ENCODE measurements at regions of chr11 and their contacts with region 1.

Region 1: DNA sequence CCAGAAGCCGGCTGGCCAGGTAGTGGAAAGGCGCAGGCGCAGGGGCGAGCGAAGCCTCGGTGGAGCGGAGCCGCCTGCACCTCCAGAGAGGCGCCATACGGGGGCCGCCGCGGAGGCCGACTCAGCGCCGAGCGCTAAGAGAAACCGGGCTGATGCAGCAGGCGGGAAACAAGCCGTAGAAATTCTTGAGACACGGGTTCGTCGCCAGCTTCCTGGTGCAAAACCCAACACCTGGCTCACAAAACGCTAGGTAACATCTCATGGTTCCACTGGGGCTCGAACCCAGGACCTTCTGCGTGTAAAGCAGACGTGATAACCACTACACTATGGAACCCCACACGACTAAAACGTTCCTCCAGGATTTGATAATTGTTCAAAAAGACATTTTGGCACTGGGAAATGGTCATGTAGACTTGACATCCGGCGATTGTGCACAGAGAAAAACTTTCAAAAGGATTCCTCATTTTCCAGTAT is 39.1 kb downstream of the OR4D9 start:
- DNase-seq: peak; percentile 75
- ATAC-seq: peak; percentile 91
- H3K4me3 Mint-ChIP-seq: peak overlapping the region; percentile 87
- H3K27ac Mint-ChIP-seq: peak overlapping the region; percentile 94
- H3K4me1 Mint-ChIP-seq: peaks cover 31% of the 10 kb centered on the region
- H3K27me3 Mint-ChIP-seq: no peaks in the 10 kb centered on the region
- CTCF ChIP-seq: peak; percentile 43

Region 2: GRCh38 chr11:59062602-59063529 is 487.5 kb before region 1 on chr11:
- CTCF ChIA-PET with region 1: no interaction called
- POLR2A ChIA-PET with region 1: interaction called, 16 read pairs
- intact Hi-C with region 1: no loop called
- DNase-seq: no peak
- ATAC-seq: no peak
- H3K4me3 Mint-ChIP-seq: no peak overlapping the region
- H3K27ac Mint-ChIP-seq: no peak overlapping the region
- H3K4me1 Mint-ChIP-seq: peaks cover 28% of the 10 kb centered on the region
- H3K27me3 Mint-ChIP-seq: no peaks in the 10 kb centered on the region
- CTCF ChIP-seq: no peak

Region 3: DNA sequence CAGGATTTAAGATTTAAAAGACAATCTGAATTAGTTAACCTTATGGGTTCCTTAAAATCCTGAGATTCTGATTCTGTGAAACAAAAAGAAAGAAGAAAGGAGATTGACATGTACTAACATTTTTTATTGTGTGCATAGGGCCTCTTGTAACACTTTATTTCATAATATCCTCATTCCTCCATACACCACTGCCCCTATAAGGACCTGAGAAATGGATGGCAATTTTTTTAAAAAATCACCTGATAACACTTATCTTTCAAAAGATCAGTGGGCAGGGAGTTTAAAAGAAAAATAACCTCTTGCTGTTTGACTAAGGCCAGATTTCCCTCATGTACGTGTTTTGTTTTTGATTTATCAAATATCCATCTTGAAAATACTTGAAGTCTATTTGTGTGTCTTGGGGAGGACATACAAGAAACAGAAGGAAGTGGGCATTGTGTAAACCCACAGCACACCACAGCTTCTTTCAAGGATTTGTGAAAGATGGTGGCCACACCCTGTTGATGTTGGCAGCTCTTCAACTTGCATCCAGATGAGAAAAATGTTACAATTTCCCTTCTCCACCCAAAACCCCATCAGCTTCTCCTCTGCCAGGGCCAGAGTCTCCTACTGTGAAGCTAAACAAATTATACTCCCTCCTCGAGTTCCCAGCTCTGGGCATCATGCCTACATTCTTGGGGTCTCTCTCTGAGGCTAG is 302.7 kb before region 1 on chr11:
- CTCF ChIA-PET with region 1: no interaction called
- POLR2A ChIA-PET with region 1: no interaction called
- intact Hi-C with region 1: no loop called
- DNase-seq: no peak
- ATAC-seq: no peak
- H3K4me3 Mint-ChIP-seq: no peak overlapping the region
- H3K27ac Mint-ChIP-seq: no peak overlapping the region
- H3K4me1 Mint-ChIP-seq: peaks cover 7% of the 10 kb centered on the region
- H3K27me3 Mint-ChIP-seq: no peaks in the 10 kb centered on the region
- CTCF ChIP-seq: no peak

Region 4: GRCh38 chr11:59560702-59561469 is 10.5 kb after region 1 on chr11:
- CTCF ChIA-PET with region 1: interaction called, 4 read pairs
- POLR2A ChIA-PET with region 1: interaction called, 19 read pairs
- intact Hi-C with region 1: loop called (anchors 1 kb)
- DNase-seq: peak; percentile 62
- ATAC-seq: peak; percentile 78
- H3K4me3 Mint-ChIP-seq: peak overlapping the region; percentile 92
- H3K27ac Mint-ChIP-seq: peak overlapping the region; percentile 91
- H3K4me1 Mint-ChIP-seq: peaks cover 43% of the 10 kb centered on the region
- H3K27me3 Mint-ChIP-seq: peaks cover 3% of the 10 kb centered on the region
- CTCF ChIP-seq: no peak

Region 5: GRCh38 chr11:59810189-59810910 is 259.9 kb after region 1 on chr11 and contains the start of gene MRPL16:
- CTCF ChIA-PET with region 1: no interaction called
- POLR2A ChIA-PET with region 1: no interaction called
- intact Hi-C with region 1: loop called (anchors 1 kb)
- DNase-seq: peak; percentile 81
- ATAC-seq: peak; percentile 98
- H3K4me3 Mint-ChIP-seq: peak within 1 kb of the TSS; percentile 92
- H3K27ac Mint-ChIP-seq: peak within 1 kb of the TSS; percentile 87
- H3K4me1 Mint-ChIP-seq: peaks cover 20% of the 10 kb centered on the region
- H3K27me3 Mint-ChIP-seq: peaks cover 3% of the 10 kb centered on the region
- CTCF ChIP-seq: no peak
- total RNA-seq, gene MRPL16: 56.4 and 57.7 TPM in 2 replicates